Thyroid gland (tissue), 4 donors: ENCODE measurements at regions of chr14 and their contacts with region 1.

Region 1: GRCh38 chr14:102694530-102695166 is 82.6 kb upstream of the TRAF3 start:
- DNase-seq: peak; percentile 51 to 55
- H3K4me3 ChIP-seq: no peak overlapping the region
- H3K27ac ChIP-seq: no peak overlapping the region
- H3K4me1 ChIP-seq: peaks cover 10 to 14% of the 10 kb centered on the region in 2 donors
- H3K27me3 ChIP-seq: no peaks in the 10 kb centered on the region
- CTCF ChIP-seq: peak; percentile 30 to 79 (median 70)
- POLR2A ChIP-seq: no peak

Region 2: DNA sequence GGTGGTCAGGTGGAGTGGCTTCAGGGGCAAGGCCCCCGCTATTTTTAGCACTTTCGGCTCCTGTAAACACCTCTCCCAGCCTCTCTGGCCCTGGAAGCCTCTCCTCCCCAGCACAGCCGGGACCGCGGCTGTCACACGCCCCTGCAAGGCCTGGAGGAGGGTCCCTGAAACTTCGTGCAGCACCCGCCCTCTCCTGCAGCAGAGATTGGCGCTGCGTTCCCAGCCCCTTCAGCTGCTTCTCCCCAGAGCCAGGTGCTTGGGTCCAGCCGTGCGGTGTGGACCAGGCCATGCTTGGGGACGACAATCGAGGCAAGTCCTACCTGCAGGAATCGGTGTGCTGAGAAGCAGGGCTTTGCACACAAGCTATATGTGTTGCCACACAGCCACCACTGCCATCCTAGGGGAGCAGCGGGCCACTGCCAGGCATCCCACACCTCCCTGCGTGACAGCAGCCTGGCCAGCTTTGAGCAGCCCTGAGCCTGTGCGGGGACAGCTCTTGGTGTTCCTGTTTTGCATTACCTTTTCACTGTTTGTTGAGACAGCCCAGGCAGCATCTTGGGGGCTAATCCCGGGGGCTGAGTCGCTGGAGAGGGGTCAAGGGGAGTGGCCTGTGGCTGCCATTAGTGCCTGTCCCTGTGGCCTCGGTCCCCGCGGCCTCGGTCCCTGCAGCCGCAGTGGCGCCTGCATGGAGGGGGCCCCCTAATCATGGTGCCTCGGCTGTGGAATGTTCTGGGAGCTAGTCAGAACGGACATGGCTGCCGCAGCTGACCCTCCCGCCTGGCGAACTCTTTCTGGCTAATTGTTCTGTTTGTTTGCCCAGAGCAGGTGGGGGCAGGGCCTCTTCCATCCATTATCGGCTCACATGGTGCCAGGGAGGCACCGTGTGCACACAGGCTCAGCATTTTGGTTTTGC is 55.0 kb after region 1 on chr14:
- intact Hi-C with region 1: no loop called
- DNase-seq: no peak
- H3K4me3 ChIP-seq: no peak overlapping the region
- H3K27ac ChIP-seq: no peak overlapping the region
- H3K4me1 ChIP-seq: no peaks in the 10 kb centered on the region
- H3K27me3 ChIP-seq: no peaks in the 10 kb centered on the region
- CTCF ChIP-seq: no peak
- POLR2A ChIP-seq: no peak

Region 3: GRCh38 chr14:102819176-102819628 is 124.6 kb after region 1 on chr14:
- intact Hi-C with region 1: no loop called
- DNase-seq: no peak
- H3K4me3 ChIP-seq: no peak overlapping the region
- H3K27ac ChIP-seq: no peak overlapping the region
- H3K4me1 ChIP-seq: peaks cover 0 to 23% of the 10 kb centered on the region in 2 donors
- H3K27me3 ChIP-seq: no peaks in the 10 kb centered on the region
- CTCF ChIP-seq: no peak
- POLR2A ChIP-seq: no peak

Region 4: DNA sequence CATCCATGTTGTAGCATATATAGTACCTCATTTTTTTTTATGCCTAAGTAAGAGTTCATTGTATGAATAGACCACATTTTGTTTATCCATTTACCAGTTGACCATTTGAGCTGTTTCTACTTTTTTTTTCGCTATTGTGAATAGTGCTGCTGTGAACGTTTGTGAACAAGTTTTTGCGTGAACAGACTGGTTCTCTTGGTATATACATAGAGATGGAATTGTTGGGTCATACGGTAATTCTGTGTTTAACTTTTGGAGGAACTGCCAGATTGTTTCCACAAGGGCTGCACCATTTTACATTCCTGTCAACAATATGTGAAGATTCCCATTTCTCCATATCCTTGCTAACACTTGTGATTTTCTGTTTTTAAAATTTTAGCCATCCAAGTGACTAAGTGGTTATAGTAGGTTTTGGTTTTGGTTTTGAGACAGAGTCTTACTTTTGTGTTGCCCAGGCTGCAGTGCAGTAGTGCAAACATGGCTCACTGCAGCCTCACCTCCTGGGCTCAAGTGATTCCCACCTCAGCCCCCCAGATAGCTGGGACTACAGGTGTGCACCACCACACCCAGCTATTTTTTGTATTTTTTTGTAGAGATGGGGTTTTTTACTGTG is 159.5 kb after region 1 on chr14:
- intact Hi-C with region 1: no loop called
- DNase-seq: no peak
- H3K4me3 ChIP-seq: no peak overlapping the region
- H3K27ac ChIP-seq: no peak overlapping the region
- H3K4me1 ChIP-seq: peaks cover 0 to 7% of the 10 kb centered on the region in 2 donors
- H3K27me3 ChIP-seq: no peaks in the 10 kb centered on the region
- CTCF ChIP-seq: no peak
- POLR2A ChIP-seq: no peak

Region 5: GRCh38 chr14:102917469-102918211 is 223.0 kb after region 1 on chr14:
- intact Hi-C with region 1: loop called (anchors 5 kb)
- DNase-seq: peak; percentile 62 to 65
- H3K4me3 ChIP-seq: no peak overlapping the region
- H3K27ac ChIP-seq: no peak overlapping the region
- H3K4me1 ChIP-seq: peaks cover 0 to under 1% of the 10 kb centered on the region in 2 donors
- H3K27me3 ChIP-seq: peaks cover 2% of the 10 kb centered on the region
- CTCF ChIP-seq: peak in 5 of 6 experiments; percentile 23 to 74 (median 63)
- POLR2A ChIP-seq: no peak

Region 6: GRCh38 chr14:103091041-103091882 is 396.6 kb after region 1 on chr14:
- intact Hi-C with region 1: loop called (anchors 10 kb)
- DNase-seq: peak; percentile 70 to 72
- H3K4me3 ChIP-seq: peak overlapping the region in 1 of 3 donors; percentile 48
- H3K27ac ChIP-seq: peak overlapping the region in 1 of 3 donors; percentile 18
- H3K4me1 ChIP-seq: peaks cover 0 to 8% of the 10 kb centered on the region in 2 donors
- H3K27me3 ChIP-seq: no peaks in the 10 kb centered on the region
- CTCF ChIP-seq: peak; percentile 17 to 64 (median 44)
- POLR2A ChIP-seq: no peak